ENCODE measurements at regions of chr11 and their contacts with region 1.

Region 1: GRCh38 chr11:1917671-1918516 is 1.6 kb upstream of the TNNT3 start:
- DNase-seq: peak in 1 of 3 donors; percentile 68
- ATAC-seq: peak; percentile 16 to 30
- H3K4me3 ChIP-seq: no peak overlapping the region
- H3K27ac ChIP-seq: no peak overlapping the region
- H3K4me1 ChIP-seq: peaks cover 4% of the 10 kb centered on the region
- H3K27me3 ChIP-seq: no peaks in the 10 kb centered on the region

Region 2: GRCh38 chr11:1852877-1853276 is 65.0 kb before region 1 on chr11 and contains the start of gene LSP1:
- intact Hi-C with region 1: loop called in 1 of 4 experiments (anchors 10 kb)
- DNase-seq: peak in 1 of 3 donors; percentile 68
- ATAC-seq: no peak
- H3K4me3 ChIP-seq: no peak within 1 kb of the TSS
- H3K27ac ChIP-seq: no peak within 1 kb of the TSS
- H3K4me1 ChIP-seq: no peaks in the 10 kb centered on the region
- H3K27me3 ChIP-seq: no peaks in the 10 kb centered on the region
- total RNA-seq, gene LSP1: 7.6 to 18.3 (median 14.8) TPM

Region 3: DNA sequence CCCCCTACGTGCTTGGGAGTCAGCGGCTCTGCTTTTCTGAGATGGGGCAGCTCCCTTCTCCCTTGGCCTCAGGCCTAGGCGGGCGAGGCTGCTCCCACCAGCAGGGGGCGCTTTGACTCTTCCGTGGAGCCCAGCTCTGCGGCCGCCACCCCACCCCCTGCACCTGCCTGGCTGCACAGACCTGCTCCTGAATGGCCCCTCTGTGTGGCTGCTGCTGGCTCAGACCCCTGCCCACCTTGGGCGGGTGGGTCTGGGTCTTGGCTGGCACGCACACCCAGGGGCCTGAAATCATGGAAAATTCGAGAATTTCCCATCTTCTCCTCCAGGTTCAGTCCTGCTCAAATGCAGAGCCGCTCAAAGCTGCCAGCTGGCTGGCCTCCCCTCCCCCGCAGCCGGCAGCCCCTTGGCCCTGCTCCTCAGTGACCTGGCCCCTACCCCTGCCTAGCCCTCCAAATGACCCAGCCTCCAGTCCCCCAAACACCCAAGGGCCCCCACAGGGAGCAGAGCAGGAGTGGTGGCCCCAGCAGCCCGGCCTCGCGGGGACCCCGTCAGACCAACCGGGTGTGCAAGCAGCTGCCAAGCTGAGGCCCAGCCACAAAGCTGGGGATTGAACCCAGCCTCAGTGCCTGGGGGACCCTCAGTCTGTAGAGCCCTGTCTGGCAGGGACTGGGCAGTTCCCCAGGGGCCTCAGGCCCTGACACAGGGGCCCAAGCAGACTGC is 35.2 kb before region 1 on chr11:
- intact Hi-C with region 1: loop called in 3 of 4 experiments (anchors 5 kb)
- DNase-seq: peak; percentile 85 to 95 (median 95)
- ATAC-seq: peak; percentile 75 to 82
- H3K4me3 ChIP-seq: no peak overlapping the region
- H3K27ac ChIP-seq: peak overlapping the region; percentile 50
- H3K4me1 ChIP-seq: peaks cover 5% of the 10 kb centered on the region
- H3K27me3 ChIP-seq: no peaks in the 10 kb centered on the region

Region 4: DNA sequence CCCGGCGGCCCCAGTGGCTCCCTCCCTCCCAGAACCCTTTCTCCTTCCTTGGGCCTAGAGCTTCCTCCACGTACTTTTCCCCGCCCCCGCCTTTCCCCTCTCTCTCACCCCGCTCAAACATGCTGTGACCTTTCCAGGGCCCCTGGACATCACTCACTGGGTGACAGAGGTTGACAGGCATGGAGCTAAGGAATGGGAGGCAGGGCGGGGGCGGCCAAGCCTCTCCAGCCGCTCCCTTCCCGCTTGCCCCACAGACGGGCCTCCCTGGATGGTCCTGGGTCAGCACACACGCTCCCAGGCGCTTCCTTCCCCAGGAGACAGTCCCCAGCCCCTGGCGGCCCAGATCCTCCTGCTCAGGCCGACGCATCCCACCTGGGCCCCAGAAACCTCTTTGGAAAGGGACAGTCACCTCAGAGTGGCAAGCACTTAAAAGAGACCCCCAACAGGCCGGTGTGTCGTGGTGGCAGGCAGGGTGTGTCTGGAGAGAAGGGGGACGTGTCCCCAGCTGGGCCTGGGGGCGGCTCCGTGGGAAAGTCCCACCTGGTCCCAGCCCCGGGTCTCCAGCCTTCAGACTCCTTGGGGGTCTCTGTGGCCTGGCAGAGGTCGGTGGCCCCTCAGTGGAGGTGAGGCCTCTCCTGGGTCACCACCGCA is 70.9 kb after region 1 on chr11:
- intact Hi-C with region 1: no loop called
- DNase-seq: peak in 2 of 3 donors; percentile 43
- ATAC-seq: peak in 1 of 2 donors; percentile 31
- H3K4me3 ChIP-seq: no peak overlapping the region
- H3K27ac ChIP-seq: no peak overlapping the region
- H3K4me1 ChIP-seq: no peaks in the 10 kb centered on the region
- H3K27me3 ChIP-seq: no peaks in the 10 kb centered on the region

Measured in right cardiac atrium (tissue), 5 donors.